Right ventricle myocardium superior (tissue), 1 donor: ENCODE measurements at regions of chr6 and their contacts with region 1.

Region 1: DNA sequence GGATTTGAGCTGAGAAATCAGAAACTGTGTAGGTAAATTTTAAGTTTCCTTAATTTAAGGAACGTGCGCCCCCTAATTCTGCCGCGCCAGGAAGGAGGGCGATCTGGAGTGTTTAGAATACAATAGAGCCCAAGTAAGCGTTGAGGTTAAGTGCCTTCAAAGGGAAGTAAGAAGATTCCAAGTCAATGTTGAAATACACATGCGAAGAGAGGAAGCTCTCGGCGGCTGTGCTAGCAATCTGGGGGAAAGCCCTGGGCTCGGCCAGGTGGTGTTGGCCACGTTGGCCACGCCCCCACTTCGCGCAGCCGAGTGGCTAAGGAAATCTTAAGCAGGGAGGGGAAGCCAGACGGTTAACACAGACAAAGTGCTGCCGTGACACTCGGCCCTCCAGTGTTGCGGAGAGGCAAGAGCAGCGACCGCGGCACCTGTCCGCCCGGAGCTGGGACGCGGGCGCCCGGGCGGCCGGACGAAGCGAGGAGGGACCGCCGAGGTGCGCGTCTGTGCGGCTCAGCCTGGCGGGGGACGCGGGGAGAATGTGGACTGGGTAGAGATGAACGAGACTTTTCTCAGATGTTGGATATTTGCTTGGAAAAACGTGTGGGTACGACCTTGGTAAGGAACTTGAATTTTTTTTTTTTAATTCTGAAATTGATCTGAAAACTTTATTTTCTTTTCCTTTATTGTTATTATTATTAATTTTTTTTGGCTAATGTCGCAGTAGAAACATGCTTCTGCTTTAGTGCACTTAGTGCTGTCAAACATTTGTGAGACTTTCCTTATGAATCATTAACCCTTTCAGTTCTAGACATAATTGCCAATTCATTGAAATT is at the start of gene PRDM1:
- DNase-seq: peak; percentile 88
- ATAC-seq: peak; percentile 75
- total RNA-seq, gene PRDM1: 1.1 TPM

Region 2: GRCh38 chr6:105992315-105992961 is 93.8 kb before region 1 on chr6:
- intact Hi-C with region 1: loop called (anchors 10 kb)
- DNase-seq: peak; percentile 90
- ATAC-seq: peak; percentile 97